ENCODE measurements at regions of chr12 and their contacts with region 1.

Region 1: DNA sequence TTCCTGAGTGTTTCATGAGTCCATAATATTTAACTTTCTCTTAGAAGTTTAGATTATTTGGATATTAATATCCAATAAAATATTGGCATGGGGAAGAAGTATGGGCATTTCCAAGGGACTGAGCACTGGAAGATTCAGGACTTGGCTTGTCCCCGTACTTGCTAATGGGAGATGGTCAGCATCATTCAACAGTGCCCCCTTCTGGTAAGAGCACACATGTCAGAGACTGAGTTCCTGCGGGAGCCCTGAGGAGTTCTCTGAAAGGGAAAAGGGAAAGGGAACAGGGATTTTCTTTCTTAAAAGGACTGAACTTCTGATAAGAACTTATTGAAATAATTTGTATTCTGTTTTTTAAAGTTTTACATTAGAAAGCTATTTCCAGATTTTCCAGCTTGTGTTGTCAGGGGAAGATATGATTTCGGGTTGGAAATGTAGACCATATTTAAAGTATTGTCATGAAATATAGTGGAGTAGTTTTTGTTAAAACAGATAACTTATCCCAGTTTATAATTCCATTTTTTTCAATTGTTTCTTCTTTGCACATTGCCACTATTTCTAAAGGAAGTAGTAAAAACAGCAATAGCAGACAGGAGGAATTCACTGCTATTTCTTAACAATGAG is 59.8 kb upstream of the C12orf71 start:
- DNase-seq: peak in 1 of 2 donors; percentile 70
- ATAC-seq: peak; percentile 92
- H3K4me3 ChIP-seq: no peak overlapping the region
- H3K27ac ChIP-seq: no peak overlapping the region
- H3K4me1 ChIP-seq: no peaks in the 10 kb centered on the region
- H3K27me3 ChIP-seq: no peaks in the 10 kb centered on the region

Region 2: GRCh38 chr12:27024291-27024690 is 117.9 kb before region 1 on chr12:
- intact Hi-C with region 1: loop called in 1 of 2 experiments (anchors 5 kb)
- DNase-seq: no peak
- ATAC-seq: no peak
- H3K4me3 ChIP-seq: no peak overlapping the region
- H3K27ac ChIP-seq: no peak overlapping the region
- H3K4me1 ChIP-seq: peaks cover 2 to 4% of the 10 kb centered on the region in 2 donors
- H3K27me3 ChIP-seq: no peaks in the 10 kb centered on the region

Region 3: GRCh38 chr12:27034607-27035293 is 107.5 kb before region 1 on chr12:
- intact Hi-C with region 1: loop called in 1 of 2 experiments (anchors 5 kb)
- DNase-seq: no peak
- ATAC-seq: no peak
- H3K4me3 ChIP-seq: no peak overlapping the region
- H3K27ac ChIP-seq: no peak overlapping the region
- H3K4me1 ChIP-seq: no peaks in the 10 kb centered on the region
- H3K27me3 ChIP-seq: no peaks in the 10 kb centered on the region

Region 4: GRCh38 chr12:27064397-27065342 is 77.5 kb before region 1 on chr12:
- intact Hi-C with region 1: no loop called
- DNase-seq: no peak
- ATAC-seq: no peak
- H3K4me3 ChIP-seq: no peak overlapping the region
- H3K27ac ChIP-seq: no peak overlapping the region
- H3K4me1 ChIP-seq: no peaks in the 10 kb centered on the region
- H3K27me3 ChIP-seq: no peaks in the 10 kb centered on the region

Region 5: GRCh38 chr12:27243804-27244683 is 101.8 kb after region 1 on chr12 and contains the start of gene STK38L:
- intact Hi-C with region 1: loop called in 1 of 2 experiments (anchors 5 kb)
- DNase-seq: peak; percentile 99
- ATAC-seq: peak; percentile 99
- H3K4me3 ChIP-seq: peak within 1 kb of the TSS; percentile 36 to 79
- H3K27ac ChIP-seq: peak within 1 kb of the TSS; percentile 83 to 94
- H3K4me1 ChIP-seq: peaks cover 0 to 7% of the 10 kb centered on the region in 2 donors
- H3K27me3 ChIP-seq: no peaks in the 10 kb centered on the region
- total RNA-seq, gene STK38L: 218 to 414 TPM

Region 6: DNA sequence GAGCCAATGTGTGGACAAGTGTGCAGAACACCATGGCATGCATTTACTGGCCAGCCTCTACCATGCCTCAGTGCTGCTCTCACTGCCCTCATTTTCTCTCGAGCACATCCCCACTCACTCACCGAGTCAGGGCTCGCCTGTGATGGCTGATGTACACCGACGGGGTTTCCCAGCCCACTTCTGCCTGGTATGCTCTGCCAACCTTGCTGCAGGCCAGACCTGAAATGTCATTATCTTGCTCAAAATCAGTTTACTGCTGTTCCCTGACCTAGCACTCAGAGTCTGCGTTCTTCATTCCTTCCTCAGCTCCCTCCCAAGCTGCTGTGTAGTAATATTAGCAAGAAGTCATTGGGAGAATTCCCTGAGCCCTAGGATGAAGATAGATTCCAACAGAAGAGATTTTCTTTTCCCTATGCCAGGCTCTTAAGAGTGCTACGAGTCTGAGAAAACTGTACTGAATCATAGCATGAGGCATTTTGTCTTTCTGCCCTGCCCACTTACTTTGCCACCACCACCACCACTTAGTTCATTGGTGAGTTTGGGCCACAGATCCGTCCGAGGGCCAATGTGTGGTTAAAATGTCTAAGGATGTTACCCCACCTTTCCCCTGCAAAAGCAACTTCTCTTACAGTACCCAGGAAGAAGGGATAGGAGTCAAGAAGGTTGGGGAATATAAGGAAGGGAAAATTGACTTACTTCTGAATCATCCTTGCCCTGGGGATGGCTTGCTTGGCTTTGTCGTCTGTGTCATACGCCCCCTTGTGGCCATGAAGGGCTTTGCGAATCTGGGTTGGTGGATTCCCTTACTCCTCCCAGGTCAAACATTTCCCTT is 241.4 kb after region 1 on chr12:
- intact Hi-C with region 1: loop called in 1 of 2 experiments (anchors 10 kb)
- DNase-seq: peak; percentile 83 to 92
- ATAC-seq: peak; percentile 85
- H3K4me3 ChIP-seq: no peak overlapping the region
- H3K27ac ChIP-seq: no peak overlapping the region
- H3K4me1 ChIP-seq: no peaks in the 10 kb centered on the region
- H3K27me3 ChIP-seq: no peaks in the 10 kb centered on the region